Activated CD4-positive, alpha-beta memory T cell treated with anti-CD3 and anti-CD28 coated beads, Interleukin-2, amount 10 ng/mL, durations not matched to agents 7 days and 5 days (primary cell): ENCODE measurements at regions of chr5 and their contacts with region 1.

Region 1: DNA sequence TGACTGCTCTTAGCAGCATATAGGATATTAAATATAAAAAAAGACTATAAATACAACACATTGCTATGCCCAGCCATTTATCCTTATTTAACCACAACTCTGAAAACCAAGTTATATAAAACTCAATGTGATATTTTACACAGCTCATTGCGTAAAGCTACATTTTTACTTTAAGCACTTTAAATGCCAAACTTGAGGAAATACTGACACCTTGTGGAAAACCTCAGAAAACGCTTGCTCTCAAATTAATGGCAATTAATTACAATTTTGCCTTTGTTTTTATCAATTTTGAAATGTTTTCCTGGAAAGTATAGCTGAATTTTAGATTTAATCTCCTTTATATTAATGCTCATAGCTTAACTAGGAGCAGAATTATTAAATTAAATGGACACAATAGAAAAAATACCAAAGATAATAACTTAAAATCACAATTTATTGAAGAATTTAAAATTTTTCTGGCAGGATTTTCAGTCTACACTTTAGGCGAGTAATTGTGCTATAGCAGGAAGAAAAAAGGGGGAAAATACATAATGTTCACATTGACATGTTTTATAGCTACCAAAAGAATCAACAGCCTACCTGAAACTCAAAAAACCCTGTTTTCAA is 25.2 kb upstream of the PLAC8L1 start:
- DNase-seq: no peak
- H3K4me3 Mint-ChIP-seq: no peak overlapping the region
- H3K27ac Mint-ChIP-seq: no peak overlapping the region
- H3K4me1 Mint-ChIP-seq: no peaks in the 10 kb centered on the region
- H3K27me3 Mint-ChIP-seq: no peaks in the 10 kb centered on the region

Region 2: DNA sequence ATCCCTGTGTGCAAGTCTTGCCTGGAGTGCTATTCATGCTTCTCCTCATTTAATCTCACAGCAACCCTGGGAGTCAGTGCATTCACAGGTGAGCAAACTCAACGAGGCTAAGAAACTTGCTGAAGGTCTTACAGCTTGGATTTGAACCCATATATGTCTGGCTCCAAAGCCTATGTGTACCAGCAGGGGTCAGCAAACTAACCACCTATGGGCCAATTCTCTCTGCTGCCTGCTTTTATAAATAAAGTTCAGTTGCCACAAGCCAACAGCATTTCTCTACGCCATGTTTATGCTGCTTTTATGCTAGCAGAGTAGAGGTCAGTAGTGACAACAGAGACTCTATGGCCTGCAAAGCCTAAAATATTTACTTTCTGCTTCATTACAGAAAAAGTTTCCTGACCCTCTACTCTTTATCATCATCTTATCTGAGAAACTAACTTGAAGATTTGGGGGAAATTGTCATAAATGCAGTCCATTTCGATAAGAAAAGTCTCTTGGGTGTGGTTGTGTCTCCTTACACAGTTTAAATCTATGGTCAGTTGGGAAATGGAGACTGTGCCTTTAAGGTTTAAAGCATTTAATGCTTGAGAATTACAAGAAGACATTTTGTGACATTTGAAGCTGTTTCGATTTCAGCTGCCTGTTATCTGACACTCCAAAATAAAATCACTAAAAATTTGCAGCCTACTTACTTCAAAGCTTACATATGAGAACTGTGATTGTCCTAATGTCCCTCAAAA is 433.1 kb before region 1 on chr5:
- CTCF ChIA-PET with region 1: interaction called, 13 read pairs
- POLR2A ChIA-PET with region 1: no interaction called
- DNase-seq: peak; percentile 34
- H3K4me3 Mint-ChIP-seq: no peak overlapping the region
- H3K27ac Mint-ChIP-seq: no peak overlapping the region
- H3K4me1 Mint-ChIP-seq: no peaks in the 10 kb centered on the region
- H3K27me3 Mint-ChIP-seq: no peaks in the 10 kb centered on the region

Region 3: GRCh38 chr5:146119515-146119914 is 11.0 kb before region 1 on chr5:
- CTCF ChIA-PET with region 1: interaction called, 13 read pairs
- POLR2A ChIA-PET with region 1: no interaction called
- DNase-seq: no peak
- H3K4me3 Mint-ChIP-seq: no peak overlapping the region
- H3K27ac Mint-ChIP-seq: no peak overlapping the region
- H3K4me1 Mint-ChIP-seq: no peaks in the 10 kb centered on the region
- H3K27me3 Mint-ChIP-seq: no peaks in the 10 kb centered on the region